Activated CD8-positive, alpha-beta T cell treated with anti-CD3 and anti-CD28 coated beads, Interleukin-2, amount 10 ng/mL, durations not matched to agents 7 days and 5 days (primary cell): ENCODE measurements at regions of chr3 and their contacts with region 1.

Region 1: DNA sequence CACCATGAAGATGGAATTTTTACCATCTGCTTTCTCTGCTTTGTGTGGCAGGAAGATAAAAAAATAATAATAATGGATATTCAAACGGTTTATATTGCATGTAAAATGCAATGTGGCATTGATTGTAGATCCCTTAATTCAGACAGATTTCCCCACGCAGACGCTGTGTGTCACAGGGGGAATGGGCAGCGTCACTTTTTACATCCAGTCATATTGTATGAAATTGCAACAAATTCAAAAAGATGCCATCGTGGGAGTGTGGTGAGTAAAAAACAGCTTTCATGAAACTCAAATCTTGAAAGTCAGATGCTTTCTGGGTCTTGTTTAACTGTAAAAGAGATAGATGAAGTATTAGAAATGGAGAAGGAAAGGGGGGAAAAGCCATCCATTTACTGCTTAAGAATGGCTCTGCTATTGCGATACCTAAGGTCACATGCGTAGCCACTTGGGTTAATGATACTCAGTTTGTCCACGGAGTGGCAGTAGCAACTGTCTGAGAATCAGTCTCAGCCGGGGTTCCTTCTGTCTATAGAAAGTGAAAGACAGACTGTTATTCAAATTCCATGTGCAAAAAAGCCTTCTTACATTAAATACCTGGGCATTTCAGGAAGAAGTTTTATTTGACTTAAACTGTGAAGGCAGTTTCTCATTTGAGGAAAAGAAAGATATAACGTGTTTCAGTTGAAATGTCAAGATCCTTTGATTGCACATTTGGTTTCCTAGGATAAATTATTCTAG is 28.5 kb downstream of the BTD start:
- DNase-seq: peak; percentile 84
- ATAC-seq: peak; percentile 99
- H3K4me3 Mint-ChIP-seq: peak overlapping the region; percentile 42
- H3K27ac Mint-ChIP-seq: no peak overlapping the region
- H3K4me1 Mint-ChIP-seq: peaks cover 24% of the 10 kb centered on the region
- H3K27me3 Mint-ChIP-seq: no peaks in the 10 kb centered on the region

Region 2: GRCh38 chr3:15647611-15648167 is 17.7 kb after region 1 on chr3:
- CTCF ChIA-PET with region 1: interaction called, 12 read pairs
- POLR2A ChIA-PET with region 1: no interaction called
- DNase-seq: peak; percentile 87
- ATAC-seq: peak; percentile 94
- H3K4me3 Mint-ChIP-seq: peak overlapping the region; percentile 46
- H3K27ac Mint-ChIP-seq: peak overlapping the region; percentile 79
- H3K4me1 Mint-ChIP-seq: peaks cover 48% of the 10 kb centered on the region
- H3K27me3 Mint-ChIP-seq: peaks cover 17% of the 10 kb centered on the region

Region 3: DNA sequence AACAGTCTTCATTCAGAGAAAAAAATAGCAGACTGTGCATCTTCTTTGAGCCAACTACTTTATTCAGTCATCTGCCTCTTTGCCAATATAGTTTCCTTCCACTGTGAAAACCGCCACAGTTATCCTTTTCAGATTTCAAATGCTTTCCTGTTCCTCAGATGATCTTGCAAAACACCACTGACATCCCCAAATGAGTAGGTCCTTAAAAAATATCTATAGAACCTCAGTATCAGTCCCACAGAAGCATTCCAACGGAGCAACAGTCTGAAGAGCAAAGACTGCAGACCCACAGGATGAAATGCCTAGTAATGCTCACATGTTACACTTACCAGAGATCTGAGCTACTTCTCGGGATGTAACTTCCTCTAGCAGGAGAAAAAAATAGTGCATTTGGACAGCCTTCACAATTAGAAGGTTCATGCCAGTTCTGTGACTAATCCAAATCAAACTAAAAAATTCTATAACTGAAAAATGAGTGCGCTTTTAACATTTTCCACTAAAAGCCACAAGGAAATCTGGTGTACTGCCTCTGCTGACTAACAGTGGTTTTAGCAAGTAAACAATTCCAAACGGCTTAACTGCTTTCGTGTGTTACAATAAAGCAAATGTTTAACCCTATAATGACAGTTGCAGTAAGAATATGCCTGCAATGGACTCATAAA is 167.7 kb after region 1 on chr3 and contains the start of gene ANKRD28:
- CTCF ChIA-PET with region 1: interaction called, 18 read pairs
- POLR2A ChIA-PET with region 1: no interaction called
- DNase-seq: peak; percentile 32
- ATAC-seq: peak; percentile 48
- H3K4me3 Mint-ChIP-seq: peak within 1 kb of the TSS; percentile 75
- H3K27ac Mint-ChIP-seq: peak within 1 kb of the TSS; percentile 82
- H3K4me1 Mint-ChIP-seq: peaks cover 83% of the 10 kb centered on the region
- H3K27me3 Mint-ChIP-seq: no peaks in the 10 kb centered on the region
- total RNA-seq, gene ANKRD28: 30.7 to 37.7 TPM

Region 4: DNA sequence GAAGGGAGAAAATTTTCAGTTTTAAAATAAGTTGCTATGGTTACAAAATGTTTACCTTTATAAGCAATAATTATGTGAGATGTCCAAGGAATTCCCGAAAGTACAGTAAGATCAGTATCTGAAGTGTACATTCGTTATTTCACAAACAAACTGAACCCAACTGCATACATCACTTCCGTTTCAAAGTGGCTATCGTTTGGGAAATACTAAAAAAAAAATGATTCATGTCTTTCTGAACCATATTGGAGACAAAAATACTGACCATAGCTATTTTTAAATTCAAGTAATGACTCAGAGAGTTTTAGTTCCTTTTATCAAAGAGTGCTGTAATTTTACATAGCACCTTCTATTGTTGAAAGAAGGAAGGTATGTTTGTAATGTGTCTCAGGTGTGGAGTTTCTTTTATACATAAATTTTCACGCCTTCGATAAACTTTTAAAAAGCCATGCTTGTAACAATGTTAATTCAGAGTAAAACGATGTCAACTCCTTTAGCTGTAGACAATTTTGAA is 175.8 kb after region 1 on chr3:
- CTCF ChIA-PET with region 1: interaction called, 207 read pairs
- POLR2A ChIA-PET with region 1: no interaction called
- DNase-seq: no peak
- ATAC-seq: no peak
- H3K4me3 Mint-ChIP-seq: no peak overlapping the region
- H3K27ac Mint-ChIP-seq: no peak overlapping the region
- H3K4me1 Mint-ChIP-seq: peaks cover 61% of the 10 kb centered on the region
- H3K27me3 Mint-ChIP-seq: no peaks in the 10 kb centered on the region

Region 5: GRCh38 chr3:15815696-15816095 is 185.7 kb after region 1 on chr3:
- CTCF ChIA-PET with region 1: interaction called, 207 read pairs
- POLR2A ChIA-PET with region 1: no interaction called
- DNase-seq: no peak
- ATAC-seq: no peak
- H3K4me3 Mint-ChIP-seq: no peak overlapping the region
- H3K27ac Mint-ChIP-seq: no peak overlapping the region
- H3K4me1 Mint-ChIP-seq: peaks cover 22% of the 10 kb centered on the region
- H3K27me3 Mint-ChIP-seq: no peaks in the 10 kb centered on the region